Posterior vena cava (tissue), 2 donors: ENCODE measurements at regions of chr5 and their contacts with region 1.

Region 1: GRCh38 chr5:156879665-156880285 is 29.7 kb downstream of the PPP1R2B start:
- DNase-seq: no peak

Region 2: DNA sequence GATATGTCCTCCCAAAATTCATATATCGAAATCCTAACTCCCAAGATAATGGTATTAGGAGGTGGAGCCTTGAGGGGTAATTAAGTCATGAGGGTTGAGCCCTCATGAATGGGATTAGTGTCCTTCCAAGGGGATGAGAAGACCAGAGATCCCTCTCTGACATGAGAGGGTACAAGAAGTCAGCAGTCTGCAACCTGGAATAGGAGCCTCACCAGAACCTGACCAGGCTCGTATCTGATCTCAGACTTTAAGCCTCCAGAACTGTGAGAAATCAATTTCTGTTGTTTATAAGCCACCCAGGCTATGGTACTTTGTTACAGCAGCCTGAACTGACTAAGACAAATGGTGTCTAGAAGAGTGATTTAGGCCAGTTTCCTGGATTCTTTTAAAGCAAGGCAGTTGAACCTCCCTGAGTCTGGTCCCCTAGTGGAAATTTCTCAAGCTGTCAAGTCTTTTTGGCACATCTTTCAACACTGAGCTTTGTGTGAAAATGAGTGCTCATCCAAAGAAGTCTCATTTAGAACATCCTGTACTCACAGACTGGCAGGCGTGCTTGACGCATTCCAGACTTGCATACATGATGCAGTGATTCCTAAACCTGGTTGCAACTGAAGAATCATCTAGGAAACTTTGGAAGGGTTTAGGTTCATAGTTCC is 284.5 kb before region 1 on chr5:
- intact Hi-C with region 1: loop called in 1 of 2 experiments (anchors 5 kb)
- DNase-seq: no peak

Region 3: DNA sequence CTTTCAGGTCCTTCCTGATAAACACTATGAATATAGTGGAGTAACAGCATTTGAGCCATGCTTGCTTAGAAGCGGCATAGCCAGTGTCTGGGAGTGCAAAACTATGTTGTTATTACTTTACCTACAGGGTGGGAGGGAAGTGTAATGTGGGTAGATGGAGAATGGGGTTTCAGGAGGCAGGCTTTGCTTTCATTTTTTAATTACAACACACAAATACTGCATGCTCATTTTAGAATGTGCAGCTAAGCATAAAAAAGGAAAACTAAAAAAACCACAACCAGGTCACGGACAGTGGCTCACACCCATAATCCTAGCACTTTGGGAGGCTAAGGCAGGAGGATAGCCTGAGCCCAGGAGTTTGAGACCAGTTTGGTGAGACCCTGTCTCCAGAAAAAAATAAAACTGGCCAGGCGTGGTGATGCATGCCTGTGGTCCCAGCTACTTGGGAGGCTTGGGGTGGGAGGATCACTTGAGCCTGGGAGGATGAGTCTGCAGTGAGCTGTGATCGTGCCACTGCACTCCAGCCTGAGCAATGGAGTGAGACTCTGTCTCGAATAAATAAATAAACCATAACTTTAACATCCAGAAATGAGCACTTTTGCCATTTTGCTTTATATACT is 158.9 kb after region 1 on chr5:
- intact Hi-C with region 1: no loop called
- DNase-seq: no peak